K562 (cell line): ENCODE measurements at regions of chr10 and their contacts with region 1.

Region 1: DNA sequence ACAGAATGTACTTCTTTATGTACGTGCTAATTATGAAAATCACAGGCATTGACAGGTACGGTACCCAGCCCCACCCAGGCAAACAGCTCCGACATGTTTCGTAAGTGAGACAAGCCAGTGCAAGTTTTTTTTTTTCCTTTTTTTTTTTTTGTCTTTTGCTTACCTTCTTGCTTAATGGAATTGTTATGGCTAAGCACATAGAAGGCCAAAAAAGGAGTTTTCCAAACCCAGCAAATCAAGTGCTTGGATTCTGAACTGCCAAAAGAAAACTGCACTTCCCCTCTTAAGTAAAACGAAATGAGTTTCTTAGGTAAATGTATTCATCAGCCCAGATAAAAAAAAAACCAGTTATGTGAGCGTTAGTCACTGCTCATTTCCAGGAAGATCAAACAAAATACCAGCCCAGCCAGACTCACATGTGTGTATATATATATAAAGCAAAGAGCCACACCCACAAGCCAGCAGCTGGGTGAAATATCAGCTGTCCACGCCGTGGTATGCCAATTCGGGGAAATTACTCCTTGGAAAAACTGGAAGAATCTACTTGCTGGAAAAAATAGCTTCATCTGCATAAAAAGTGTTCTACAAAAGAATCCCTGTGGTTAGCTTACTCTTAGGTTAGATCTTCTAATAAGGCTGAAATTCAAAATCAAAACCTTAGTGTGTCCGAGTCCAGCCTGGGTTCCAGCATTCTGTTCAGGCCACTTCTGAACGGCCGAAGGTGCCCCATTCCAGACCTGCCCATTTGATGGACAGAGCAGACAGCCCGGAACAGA is 8.0 kb downstream of the KLF6 start:
- DNase-seq: peak in 2 of 4 experiments; percentile 25 to 55
- ATAC-seq: 0 out of 3 replicates have a peak, but pooled peaks have one; percentile 18
- H3K4me3 ChIP-seq: no peak overlapping the region
- H3K27ac ChIP-seq: no peak overlapping the region
- H3K4me1 ChIP-seq: peaks cover 13 to 15% of the 10 kb centered on the region in 2 experiments; a peak in 4 of 5 replicates
- H3K27me3 ChIP-seq: no peaks in the 10 kb centered on the region
- CTCF ChIP-seq: no peak
- EP300 ChIP-seq: peak; percentile 10; the same call in 1 of the 2 replicates
- POLR2A ChIP-seq: no peak
- RAD21 ChIP-seq: no peak

Region 2: DNA sequence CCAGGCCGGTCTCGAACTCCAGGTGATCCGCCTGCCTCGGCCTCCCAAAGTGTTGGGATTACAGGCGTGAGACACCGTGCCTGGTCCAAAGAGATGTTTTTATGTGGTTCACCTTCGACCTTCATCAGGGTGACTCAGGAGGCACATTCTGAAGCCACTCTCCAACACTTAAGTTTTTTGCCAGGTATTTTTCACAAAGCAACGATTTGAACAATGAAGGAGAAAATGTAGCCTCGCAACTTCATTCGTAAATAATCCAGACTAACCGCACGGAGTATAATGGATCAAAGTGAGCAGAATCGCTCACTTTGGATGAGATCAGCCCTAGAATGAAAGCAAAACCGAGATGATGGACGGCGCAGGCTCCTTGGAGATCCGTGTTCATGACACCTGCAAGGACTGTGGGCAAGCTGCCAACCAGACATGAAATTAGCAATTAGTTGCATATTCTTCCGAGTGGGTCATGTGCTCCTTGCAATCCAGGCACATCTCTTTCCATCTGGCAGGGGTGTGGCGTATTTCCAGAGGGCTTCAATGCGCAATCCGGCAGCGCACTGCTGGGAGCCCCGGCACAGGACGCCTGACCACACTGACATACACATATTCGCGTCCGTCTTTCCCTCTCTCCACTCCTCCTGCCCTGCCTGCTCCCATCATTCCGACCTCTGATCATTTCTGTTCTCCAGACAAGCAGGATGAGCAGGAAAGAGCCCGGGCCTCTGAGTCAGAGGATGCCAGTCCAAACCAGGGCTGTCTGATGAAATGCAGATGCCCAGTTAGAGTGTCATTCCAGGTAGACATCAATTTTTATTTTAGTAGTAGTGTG is 140.4 kb before region 1 on chr10:
- CTCF ChIA-PET with region 1: no interaction called
- POLR2A ChIA-PET with region 1: no interaction called
- in situ Hi-C with region 1: no loop called
- intact Hi-C with region 1: no loop called
- DNase-seq: no peak
- ATAC-seq: no peak
- H3K4me3 ChIP-seq: no peak overlapping the region
- H3K27ac ChIP-seq: no peak overlapping the region
- H3K4me1 ChIP-seq: no peaks in the 10 kb centered on the region
- H3K27me3 ChIP-seq: peaks cover 4 to 17% of the 10 kb centered on the region in 2 experiments; a peak in 2 of 5 replicates
- CTCF ChIP-seq: no peak
- EP300 ChIP-seq: no peak
- POLR2A ChIP-seq: no peak
- RAD21 ChIP-seq: no peak

Region 3: GRCh38 chr10:3714531-3714930 is 62.5 kb before region 1 on chr10:
- CTCF ChIA-PET with region 1: no interaction called
- POLR2A ChIA-PET with region 1: no interaction called
- in situ Hi-C with region 1: no loop called
- intact Hi-C with region 1: no loop called
- DNase-seq: no peak
- ATAC-seq: no peak
- H3K4me3 ChIP-seq: no peak overlapping the region
- H3K27ac ChIP-seq: no peak overlapping the region
- H3K4me1 ChIP-seq: peaks cover 0 to 3% of the 10 kb centered on the region in 2 experiments; a peak in 1 of 5 replicates
- H3K27me3 ChIP-seq: peaks cover 2 to 33% of the 10 kb centered on the region in 2 experiments; a peak in 3 of 5 replicates
- CTCF ChIP-seq: no peak
- EP300 ChIP-seq: no peak
- POLR2A ChIP-seq: no peak
- RAD21 ChIP-seq: no peak

Region 4: DNA sequence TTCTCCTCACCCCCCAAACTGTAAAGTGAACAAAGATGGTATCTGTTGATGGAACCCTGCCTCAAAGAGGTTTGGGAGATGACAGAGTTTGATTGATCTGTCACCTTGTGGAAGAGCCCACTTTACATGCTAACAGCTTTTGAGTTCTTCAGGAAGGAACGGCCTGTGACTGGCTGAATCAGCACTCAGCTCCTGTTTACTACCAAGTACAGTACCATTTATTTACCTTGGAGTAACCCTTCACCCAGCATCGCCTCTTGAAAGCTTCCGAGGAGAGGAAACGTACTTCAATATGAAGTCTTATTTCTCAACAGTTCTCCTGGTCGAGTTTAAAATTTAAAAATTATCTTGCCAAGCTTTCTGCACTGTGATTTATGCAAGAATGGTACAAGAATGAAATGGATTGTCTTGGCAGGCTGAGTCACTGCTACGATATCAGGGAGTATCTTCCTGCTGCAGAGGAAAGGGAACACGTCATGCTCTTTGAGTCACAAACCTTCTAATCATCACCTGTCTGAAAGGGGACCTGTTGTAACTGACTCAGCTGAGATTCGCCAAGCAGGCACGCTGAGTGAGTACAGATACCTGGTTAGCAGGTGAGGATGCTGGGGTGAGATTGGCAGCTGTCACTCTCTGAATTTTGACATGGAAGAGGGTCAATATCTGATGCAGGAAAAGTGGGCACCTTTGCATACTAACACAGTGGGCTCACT is 22.1 kb before region 1 on chr10:
- CTCF ChIA-PET with region 1: no interaction called
- POLR2A ChIA-PET with region 1: interaction called, 12 read pairs
- in situ Hi-C with region 1: no loop called
- intact Hi-C with region 1: no loop called
- DNase-seq: peak; percentile 22 to 62 (median 34)
- ATAC-seq: peak; percentile 72
- H3K4me3 ChIP-seq: no peak overlapping the region
- H3K27ac ChIP-seq: no peak overlapping the region
- H3K4me1 ChIP-seq: peaks cover 0 to 17% of the 10 kb centered on the region in 2 experiments; a peak in 3 of 5 replicates
- H3K27me3 ChIP-seq: peaks cover 0 to 5% of the 10 kb centered on the region in 2 experiments; a peak in 1 of 5 replicates
- CTCF ChIP-seq: no peak
- EP300 ChIP-seq: peak; percentile 79
- POLR2A ChIP-seq: no peak
- RAD21 ChIP-seq: no peak

Region 5: DNA sequence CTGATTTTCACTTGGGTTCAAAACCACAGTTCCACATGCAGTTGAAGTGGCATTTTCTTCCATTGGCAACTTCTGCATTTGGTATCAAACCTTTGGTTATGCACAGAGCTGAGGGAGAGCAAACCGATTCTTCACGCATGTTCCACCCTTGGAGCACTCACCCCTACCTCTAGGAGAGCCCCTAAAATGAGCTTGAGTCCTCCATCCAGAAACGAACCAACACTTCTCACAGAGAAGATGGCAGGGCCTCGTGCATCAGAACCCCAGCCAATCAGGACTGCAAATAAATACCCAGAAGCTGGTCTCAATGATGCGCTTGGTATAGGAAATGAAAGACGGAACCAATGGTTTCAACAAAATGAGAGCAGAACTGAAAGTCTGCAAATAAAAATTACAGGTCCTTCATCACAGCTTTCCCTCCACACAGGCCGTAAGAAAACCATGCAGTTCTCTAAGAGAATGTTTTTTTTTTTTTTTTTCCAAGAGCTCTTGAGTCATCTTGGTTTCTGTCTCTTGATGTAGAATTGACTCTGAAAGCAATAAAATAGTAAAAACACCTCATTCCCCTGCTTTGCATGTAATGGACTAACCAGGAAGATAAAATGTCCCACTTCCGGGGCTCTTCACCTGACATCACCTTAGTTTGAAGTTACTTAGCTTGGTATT is 15.8 kb before region 1 on chr10:
- CTCF ChIA-PET with region 1: no interaction called
- POLR2A ChIA-PET with region 1: interaction called, 69 read pairs
- in situ Hi-C with region 1: no loop called
- intact Hi-C with region 1: no loop called
- DNase-seq: no peak
- ATAC-seq: no peak
- H3K4me3 ChIP-seq: no peak overlapping the region
- H3K27ac ChIP-seq: no peak overlapping the region
- H3K4me1 ChIP-seq: peaks cover 14 to 42% of the 10 kb centered on the region in 2 experiments
- H3K27me3 ChIP-seq: peaks cover 0 to 5% of the 10 kb centered on the region in 2 experiments; a peak in 1 of 5 replicates
- CTCF ChIP-seq: no peak
- EP300 ChIP-seq: no peak
- POLR2A ChIP-seq: no peak
- RAD21 ChIP-seq: no peak